CD4-positive, alpha-beta memory T cell (primary cell): ENCODE measurements at regions of chr2 and their contacts with region 1.

Region 1: DNA sequence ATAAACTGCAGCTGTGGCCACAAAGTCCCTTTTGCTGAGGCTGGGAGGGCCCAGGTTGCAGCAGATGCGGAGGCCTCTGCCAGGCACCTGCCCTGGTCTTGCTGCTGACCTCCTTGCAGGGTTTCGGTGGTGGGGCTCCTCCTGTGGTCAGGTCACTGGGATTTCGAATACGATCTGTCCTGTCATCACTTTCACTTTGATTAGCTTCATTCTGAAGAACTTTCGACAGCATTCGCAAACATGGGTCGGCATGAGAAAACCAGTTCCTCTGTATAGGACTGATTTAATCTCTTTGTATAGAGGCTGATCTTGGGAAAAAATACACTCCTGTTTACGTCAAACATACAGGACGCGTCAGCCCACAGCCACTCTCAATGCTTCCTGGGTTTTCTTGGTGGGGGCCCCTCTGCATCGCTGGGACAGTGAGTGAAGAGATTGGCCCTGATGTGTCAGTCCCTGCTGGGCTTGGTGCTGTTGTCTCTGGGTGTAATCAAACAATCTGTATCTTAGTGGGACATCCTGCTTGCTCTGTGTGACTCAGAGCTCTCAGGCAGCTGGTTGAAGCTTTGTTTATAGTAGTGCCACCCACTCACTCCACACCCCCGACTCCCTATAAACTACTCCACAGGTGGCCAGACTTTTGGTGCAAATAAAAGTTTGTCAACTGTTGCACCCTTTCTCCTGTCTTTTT is 209.4 kb upstream of the CXCR4 start:
- DNase-seq: peak; percentile 88 to 96 (median 91)
- H3K4me3 ChIP-seq: peak overlapping the region; percentile 7 to 39
- H3K4me3 Mint-ChIP-seq: peak overlapping the region; percentile 67 to 90 (median 80)
- H3K27ac ChIP-seq: peak overlapping the region; percentile 69
- H3K27ac Mint-ChIP-seq: peak overlapping the region; percentile 91 to 99 (median 98)
- H3K4me1 ChIP-seq: peaks cover 62% of the 10 kb centered on the region
- H3K4me1 Mint-ChIP-seq: peaks cover 42 to 62% (median 51%) of the 10 kb centered on the region in 4 donors
- H3K27me3 ChIP-seq: no peaks in the 10 kb centered on the region
- H3K27me3 Mint-ChIP-seq: no peaks in the 10 kb centered on the region

Region 2: GRCh38 chr2:135876066-135876711 is 451.1 kb before region 1 on chr2 and contains the start of gene MCM6:
- CTCF ChIA-PET with region 1: no interaction called
- POLR2A ChIA-PET with region 1: interaction called, 10 read pairs
- intact Hi-C with region 1: loop called (anchors 1 kb)
- DNase-seq: peak; percentile 97 to 98 (median 98)
- H3K4me3 ChIP-seq: peak within 1 kb of the TSS; percentile 82 to 84
- H3K4me3 Mint-ChIP-seq: peak within 1 kb of the TSS; percentile 81 to 96 (median 95)
- H3K27ac ChIP-seq: peak within 1 kb of the TSS; percentile 80
- H3K27ac Mint-ChIP-seq: peak within 1 kb of the TSS; percentile 94 to 97 (median 95)
- H3K4me1 ChIP-seq: peaks cover 31% of the 10 kb centered on the region
- H3K4me1 Mint-ChIP-seq: peaks cover 27 to 47% (median 37%) of the 10 kb centered on the region in 4 donors
- H3K27me3 ChIP-seq: no peaks in the 10 kb centered on the region
- H3K27me3 Mint-ChIP-seq: peaks cover 0 to 1% of the 10 kb centered on the region in 2 donors
- total RNA-seq, gene MCM6: 31.2 to 32.7 TPM

Region 3: DNA sequence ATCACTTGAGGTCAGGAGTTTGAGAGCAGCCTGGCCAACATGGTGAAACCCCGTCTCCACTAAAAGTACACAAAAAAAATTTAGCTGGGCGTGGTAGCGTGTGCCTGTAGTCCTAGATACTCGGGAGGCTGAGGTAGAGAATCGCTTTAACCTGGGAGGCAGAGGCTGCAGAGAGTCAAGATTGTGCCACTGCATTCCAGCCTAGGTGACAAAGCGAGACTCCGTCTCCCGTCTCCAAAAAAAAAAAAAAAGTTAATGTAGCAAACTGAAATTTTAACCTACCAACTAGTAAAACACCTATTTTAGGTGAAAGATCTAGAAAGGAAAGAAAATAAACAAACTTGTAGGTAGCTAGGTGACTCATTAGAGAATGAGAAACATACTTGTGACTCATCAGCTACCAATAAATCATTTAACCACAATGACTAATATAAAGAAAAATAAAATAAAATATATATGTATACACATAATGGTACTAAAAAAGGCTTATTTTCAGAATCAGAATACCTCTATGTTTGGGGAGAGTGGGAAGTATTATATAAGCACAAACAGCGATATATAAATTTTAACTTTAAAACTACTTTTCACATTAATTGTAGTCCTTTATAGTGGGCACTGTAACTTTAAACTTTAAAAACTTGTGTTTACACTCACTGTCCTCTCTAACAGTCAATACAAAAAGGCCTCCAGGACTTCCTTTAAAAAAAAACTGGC is 378.5 kb before region 1 on chr2:
- CTCF ChIA-PET with region 1: no interaction called
- POLR2A ChIA-PET with region 1: interaction called, 3 read pairs
- intact Hi-C with region 1: loop called (anchors 5 kb)
- DNase-seq: peak; percentile 45 to 68 (median 58)
- H3K4me3 ChIP-seq: no peak overlapping the region
- H3K4me3 Mint-ChIP-seq: peak overlapping the region; percentile 38 to 80 (median 68)
- H3K27ac ChIP-seq: peak overlapping the region; percentile 61
- H3K27ac Mint-ChIP-seq: peak overlapping the region; percentile 81 to 95 (median 92)
- H3K4me1 ChIP-seq: peaks cover 36% of the 10 kb centered on the region
- H3K4me1 Mint-ChIP-seq: peaks cover 36 to 72% (median 53%) of the 10 kb centered on the region in 4 donors
- H3K27me3 ChIP-seq: no peaks in the 10 kb centered on the region
- H3K27me3 Mint-ChIP-seq: no peaks in the 10 kb centered on the region

Region 4: DNA sequence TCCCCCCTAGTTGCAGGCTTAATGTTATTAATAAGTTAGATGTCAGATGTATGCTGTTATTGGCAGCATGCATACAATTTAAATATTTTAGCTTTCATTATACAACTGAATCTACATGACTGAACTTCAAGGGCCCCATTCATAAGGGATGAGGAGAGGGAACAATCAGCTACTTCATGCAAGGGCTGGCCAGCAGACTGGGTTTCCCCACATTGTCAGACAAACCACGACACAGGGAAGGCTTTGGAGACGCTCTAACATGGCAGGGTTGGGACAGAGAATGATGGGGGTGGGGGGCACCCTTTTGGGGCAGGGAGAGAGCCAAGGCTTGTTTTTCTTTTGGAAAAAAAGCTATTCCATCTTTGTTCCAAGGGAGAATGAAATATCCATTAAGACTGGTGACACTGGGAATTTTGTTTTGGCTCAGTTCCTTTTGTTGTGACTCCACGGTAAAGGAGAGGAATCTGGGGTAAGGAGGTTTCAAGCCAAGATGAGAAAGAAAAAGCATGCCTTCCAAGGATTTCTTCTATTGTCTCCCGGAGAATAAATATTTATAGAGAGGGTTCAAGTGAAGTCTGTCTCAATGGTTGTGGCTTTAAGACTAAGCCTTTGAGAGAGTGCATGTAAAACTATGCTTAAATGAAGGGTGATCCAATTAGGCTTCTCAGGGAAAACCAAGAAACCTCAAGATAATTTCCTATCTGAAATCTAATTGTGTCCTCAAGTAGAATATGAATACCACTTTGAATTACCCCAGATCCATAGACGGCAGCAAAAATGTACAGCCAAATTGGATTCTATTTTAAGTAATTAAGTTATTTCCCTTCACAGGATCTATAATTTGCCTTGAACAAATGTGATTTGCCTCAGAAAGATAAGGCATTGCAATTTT is 214.7 kb before region 1 on chr2:
- CTCF ChIA-PET with region 1: no interaction called
- POLR2A ChIA-PET with region 1: interaction called, 62 read pairs
- intact Hi-C with region 1: no loop called
- DNase-seq: peak in 1 of 5 donors; percentile 42
- H3K4me3 ChIP-seq: no peak overlapping the region
- H3K4me3 Mint-ChIP-seq: peak overlapping the region in 4 of 8 donors; percentile 36 to 88 (median 56)
- H3K27ac ChIP-seq: no peak overlapping the region
- H3K27ac Mint-ChIP-seq: peak overlapping the region in 4 of 7 donors; percentile 79 to 99 (median 92)
- H3K4me1 ChIP-seq: peaks cover 34% of the 10 kb centered on the region
- H3K4me1 Mint-ChIP-seq: peaks cover 31 to 50% (median 38%) of the 10 kb centered on the region in 4 donors
- H3K27me3 ChIP-seq: no peaks in the 10 kb centered on the region
- H3K27me3 Mint-ChIP-seq: no peaks in the 10 kb centered on the region

Region 5: DNA sequence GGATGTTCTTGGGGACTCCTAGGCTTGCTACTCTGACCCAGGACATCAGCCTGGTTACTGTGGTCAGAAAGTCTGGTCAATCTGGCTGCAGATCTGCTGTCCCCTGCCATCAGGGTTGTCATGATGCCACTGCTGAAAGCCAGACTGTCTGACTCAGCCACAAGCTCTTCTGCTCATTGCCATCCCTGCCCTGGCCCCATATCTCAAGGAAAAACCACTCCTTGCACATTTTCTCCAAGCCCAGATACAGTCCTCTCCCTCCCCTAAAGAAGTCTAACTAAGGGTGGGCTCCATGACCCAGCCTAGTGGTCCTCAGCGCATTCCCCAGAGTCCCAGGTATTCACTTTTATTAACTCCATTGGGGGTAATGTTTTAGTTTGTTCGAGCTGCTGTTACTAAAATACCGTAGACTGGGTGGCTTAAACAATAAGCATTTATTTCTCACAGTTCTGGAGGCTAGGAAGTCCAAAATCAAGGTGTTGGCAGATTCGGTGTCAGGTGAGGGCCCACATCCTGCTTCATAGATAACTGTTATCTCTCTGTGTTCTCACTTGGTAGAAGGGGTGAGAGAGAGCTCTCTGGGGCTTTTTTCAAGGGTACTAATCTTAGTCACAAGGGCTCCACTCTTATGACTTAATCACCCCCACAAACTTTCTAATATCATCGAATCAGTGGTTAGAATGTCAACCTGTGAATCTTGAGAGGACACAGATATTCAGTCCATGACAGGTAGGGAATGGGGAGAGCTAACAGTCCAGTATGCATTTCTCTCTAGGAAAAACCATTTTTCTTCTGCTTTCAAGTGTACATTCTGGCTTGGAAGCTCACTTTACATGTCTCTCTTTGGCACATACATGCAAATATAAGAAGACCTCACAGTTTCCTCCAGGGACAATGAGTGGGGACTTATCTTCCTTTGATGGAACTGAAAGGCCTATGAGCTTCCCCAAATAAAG is 114.6 kb before region 1 on chr2:
- CTCF ChIA-PET with region 1: no interaction called
- POLR2A ChIA-PET with region 1: interaction called, 14 read pairs
- intact Hi-C with region 1: no loop called
- DNase-seq: peak; percentile 53 to 70 (median 59)
- H3K4me3 ChIP-seq: no peak overlapping the region
- H3K4me3 Mint-ChIP-seq: peak overlapping the region in 7 of 8 donors; percentile 3 to 76 (median 45)
- H3K27ac ChIP-seq: peak overlapping the region; percentile 39
- H3K27ac Mint-ChIP-seq: peak overlapping the region; percentile 73 to 96 (median 90)
- H3K4me1 ChIP-seq: peaks cover 31% of the 10 kb centered on the region
- H3K4me1 Mint-ChIP-seq: peaks cover 25 to 66% (median 35%) of the 10 kb centered on the region in 4 donors
- H3K27me3 ChIP-seq: no peaks in the 10 kb centered on the region
- H3K27me3 Mint-ChIP-seq: no peaks in the 10 kb centered on the region

Region 6: GRCh38 chr2:136281281-136282114 is 45.8 kb before region 1 on chr2:
- CTCF ChIA-PET with region 1: interaction called, 3 read pairs
- POLR2A ChIA-PET with region 1: interaction called, 6 read pairs
- intact Hi-C with region 1: loop called (anchors 5 kb)
- DNase-seq: peak; percentile 67 to 88 (median 70)
- H3K4me3 ChIP-seq: no peak overlapping the region
- H3K4me3 Mint-ChIP-seq: peak overlapping the region in 7 of 8 donors; percentile 44 to 75 (median 69)
- H3K27ac ChIP-seq: peak overlapping the region; percentile 36
- H3K27ac Mint-ChIP-seq: peak overlapping the region; percentile 90 to 99 (median 96)
- H3K4me1 ChIP-seq: peaks cover 34% of the 10 kb centered on the region
- H3K4me1 Mint-ChIP-seq: peaks cover 24 to 54% (median 35%) of the 10 kb centered on the region in 4 donors
- H3K27me3 ChIP-seq: no peaks in the 10 kb centered on the region
- H3K27me3 Mint-ChIP-seq: no peaks in the 10 kb centered on the region

Region 7: DNA sequence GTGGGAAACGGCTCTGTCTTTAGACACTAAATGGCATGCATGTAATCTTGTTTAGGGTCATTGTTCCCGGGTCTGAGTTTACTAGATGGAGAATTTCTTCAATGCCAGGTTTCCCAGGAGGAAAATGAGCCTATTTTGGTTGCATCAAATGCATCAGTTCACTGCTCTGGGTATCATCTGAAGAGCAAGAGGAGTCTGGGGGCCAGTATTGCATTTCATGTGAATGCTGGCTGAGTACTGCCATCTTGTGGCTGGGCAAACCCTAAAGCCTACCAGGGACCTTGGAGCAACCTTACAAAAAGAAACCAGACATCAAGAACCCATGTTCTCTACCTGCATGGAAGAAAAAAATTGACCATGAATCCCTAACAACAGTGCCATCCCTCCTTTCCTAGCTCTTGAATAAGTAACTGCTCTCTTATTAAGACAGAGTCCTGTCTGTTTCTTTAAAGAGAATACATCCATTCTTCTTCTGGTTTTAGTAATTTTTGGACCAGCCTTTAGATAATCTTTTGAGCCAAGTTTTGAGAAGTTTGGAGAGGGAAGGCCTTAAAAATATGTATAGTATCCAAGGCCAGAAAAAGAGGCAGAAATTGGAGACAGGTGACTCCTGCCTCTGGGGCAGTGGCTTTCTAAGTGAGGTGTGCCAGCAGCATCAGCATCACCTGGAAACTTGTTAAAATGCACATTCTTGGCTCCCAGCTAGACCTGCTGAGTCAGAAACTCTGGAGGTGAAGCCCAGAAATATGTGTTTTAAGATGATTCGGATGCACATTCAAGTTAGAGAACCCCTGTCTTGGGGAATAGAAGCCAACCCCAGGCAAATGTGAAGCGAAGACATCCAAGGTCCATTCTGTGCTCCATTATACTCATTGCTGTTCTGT is 51.6 kb after region 1 on chr2:
- CTCF ChIA-PET with region 1: interaction called, 3 read pairs
- POLR2A ChIA-PET with region 1: interaction called, 14 read pairs
- intact Hi-C with region 1: loop called (anchors 2 kb)
- DNase-seq: peak; percentile 71 to 78 (median 74)
- H3K4me3 ChIP-seq: no peak overlapping the region
- H3K4me3 Mint-ChIP-seq: no peak overlapping the region
- H3K27ac ChIP-seq: no peak overlapping the region
- H3K27ac Mint-ChIP-seq: peak overlapping the region in 6 of 7 donors; percentile 70 to 89 (median 78)
- H3K4me1 ChIP-seq: peaks cover 55% of the 10 kb centered on the region
- H3K4me1 Mint-ChIP-seq: peaks cover 49 to 79% (median 53%) of the 10 kb centered on the region in 4 donors
- H3K27me3 ChIP-seq: no peaks in the 10 kb centered on the region
- H3K27me3 Mint-ChIP-seq: no peaks in the 10 kb centered on the region